ENCODE measurements at regions of chr10 and their contacts with region 1.

Region 1: GRCh38 chr10:110497438-110498086 is at the start of gene DUSP5:
- DNase-seq: no peak
- ATAC-seq: peak; percentile 72
- H3K4me3 ChIP-seq: peak within 1 kb of the TSS; percentile 87 to 92
- H3K27ac ChIP-seq: peak within 1 kb of the TSS; percentile 94
- H3K4me1 ChIP-seq: peaks cover 48% of the 10 kb centered on the region
- H3K27me3 ChIP-seq: no peaks in the 10 kb centered on the region
- CTCF ChIP-seq: no peak
- total RNA-seq, gene DUSP5: 30.1 TPM

Region 2: DNA sequence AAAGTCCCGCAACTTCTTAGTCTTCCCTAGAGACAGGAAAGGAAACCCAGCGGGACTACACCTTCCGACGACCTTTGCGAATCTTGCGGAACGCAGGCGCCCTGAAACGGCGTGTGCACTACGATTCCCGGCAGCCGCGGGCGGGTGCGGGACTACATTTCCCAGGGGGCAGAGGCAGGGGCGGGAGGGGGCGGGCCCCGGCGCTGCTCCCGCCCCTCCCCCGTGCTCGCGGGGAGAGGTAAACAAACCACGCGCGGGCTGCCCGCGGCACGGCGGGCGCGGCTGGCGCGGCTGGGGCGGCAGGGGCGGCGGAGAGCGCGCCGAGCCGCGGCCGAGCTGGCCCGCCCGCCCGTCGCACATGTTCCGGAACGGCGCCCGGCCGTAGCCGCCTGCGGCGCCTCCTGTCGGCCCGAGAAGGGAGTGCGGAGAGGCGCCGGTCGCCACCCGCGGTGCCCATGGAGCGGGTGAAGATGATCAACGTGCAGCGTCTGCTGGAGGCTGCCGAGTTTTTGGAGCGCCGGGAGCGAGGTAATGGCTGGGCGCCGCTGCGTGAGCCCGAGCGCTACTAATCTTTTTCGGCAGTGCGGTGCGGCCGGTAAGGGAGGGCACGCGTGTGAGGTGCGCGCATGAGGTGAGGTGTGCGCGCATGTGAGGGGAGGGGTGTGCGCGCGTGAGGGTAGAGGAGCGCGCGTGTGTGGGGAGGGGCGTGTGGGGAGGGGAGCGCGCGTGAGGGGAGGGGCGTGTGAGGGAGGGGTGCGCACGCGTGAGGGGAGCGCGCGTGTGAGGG is 271.6 kb before region 1 on chr10:
- CTCF ChIA-PET with region 1: interaction called, 10 read pairs
- POLR2A ChIA-PET with region 1: no interaction called
- in situ Hi-C with region 1: no loop called
- intact Hi-C with region 1: no loop called
- DNase-seq: no peak
- ATAC-seq: peak; percentile 95
- H3K4me3 ChIP-seq: peak overlapping the region; percentile 71 to 79
- H3K27ac ChIP-seq: peak overlapping the region; percentile 30
- H3K4me1 ChIP-seq: peaks cover 3% of the 10 kb centered on the region; the same call in 1 of the 2 replicates
- H3K27me3 ChIP-seq: no peaks in the 10 kb centered on the region; the same call in 1 of the 2 replicates
- CTCF ChIP-seq: peak; percentile 93

Region 3: DNA sequence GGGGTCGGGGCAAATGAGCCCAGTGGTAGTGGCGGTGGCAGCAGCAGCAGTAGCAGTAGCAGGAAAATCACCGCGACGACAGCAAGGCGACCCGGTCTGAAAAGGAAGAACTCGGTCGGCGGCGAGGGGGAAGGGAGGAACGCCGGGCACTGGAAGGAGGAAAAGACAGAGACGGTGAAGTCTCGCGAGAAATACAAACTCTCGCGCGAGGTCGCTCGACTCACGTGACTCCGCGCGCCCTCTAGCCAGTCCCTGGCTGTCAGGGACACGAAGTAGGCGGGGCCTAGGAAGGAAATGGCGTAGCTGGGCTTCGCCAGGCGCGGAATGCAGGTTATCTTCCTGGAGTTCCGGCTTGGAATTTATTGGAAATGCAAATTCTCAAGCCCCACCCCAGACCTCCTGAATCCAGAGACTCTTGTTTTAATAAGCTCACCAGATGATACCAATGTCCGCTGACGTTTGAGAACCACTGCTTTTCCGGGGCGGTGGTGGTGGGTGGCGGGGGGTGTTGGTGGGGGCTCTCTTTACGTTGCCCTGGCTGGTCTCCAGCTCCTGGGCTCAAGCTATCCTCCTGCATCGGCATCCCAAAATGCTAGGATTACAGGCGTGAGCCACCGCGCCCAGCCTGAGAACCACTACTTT is 192.7 kb before region 1 on chr10 and contains the start of gene SMNDC1:
- CTCF ChIA-PET with region 1: interaction called, 11 read pairs
- POLR2A ChIA-PET with region 1: no interaction called
- in situ Hi-C with region 1: no loop called
- intact Hi-C with region 1: no loop called
- DNase-seq: peak; percentile 91
- ATAC-seq: peak; percentile 97
- H3K4me3 ChIP-seq: peak within 1 kb of the TSS; percentile 97 to 98
- H3K27ac ChIP-seq: peak within 1 kb of the TSS; percentile 96
- H3K4me1 ChIP-seq: peaks cover 22% of the 10 kb centered on the region
- H3K27me3 ChIP-seq: no peaks in the 10 kb centered on the region
- CTCF ChIP-seq: no peak
- total RNA-seq, gene SMNDC1: 62.2 TPM

Region 4: DNA sequence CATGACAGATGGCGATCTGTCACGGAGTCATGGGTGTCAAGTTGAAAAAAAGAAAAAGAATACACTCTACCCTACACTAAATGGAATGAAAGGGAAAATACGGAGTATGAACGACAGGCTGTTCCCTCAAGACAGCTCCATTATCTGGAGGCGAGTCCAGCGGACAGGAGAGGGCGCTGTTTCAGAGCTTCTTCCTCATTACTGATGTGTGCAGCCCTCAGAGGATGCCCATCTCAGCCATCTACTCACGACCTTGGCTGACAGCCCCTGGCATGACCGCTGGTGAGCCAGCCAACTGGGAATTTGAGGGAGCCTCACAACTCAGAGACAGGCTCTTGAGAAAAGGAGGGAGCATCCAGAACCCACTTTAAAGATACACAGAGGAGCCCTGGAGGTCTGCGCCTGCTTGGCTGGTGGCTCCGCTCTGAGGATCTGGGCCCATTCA is 143.2 kb before region 1 on chr10:
- CTCF ChIA-PET with region 1: interaction called, 11 read pairs
- POLR2A ChIA-PET with region 1: no interaction called
- in situ Hi-C with region 1: no loop called
- intact Hi-C with region 1: loop called (anchors 5 kb)
- DNase-seq: peak; percentile 82
- ATAC-seq: peak; percentile 80
- H3K4me3 ChIP-seq: 0 out of 4 replicates have a peak overlapping the region, but pooled peaks of 1 of the 2 experiments have one; percentile 12
- H3K27ac ChIP-seq: peak overlapping the region; percentile 42; the same call in 1 of the 2 replicates
- H3K4me1 ChIP-seq: peaks cover 26% of the 10 kb centered on the region
- H3K27me3 ChIP-seq: no peaks in the 10 kb centered on the region
- CTCF ChIP-seq: peak; percentile 94

Region 5: DNA sequence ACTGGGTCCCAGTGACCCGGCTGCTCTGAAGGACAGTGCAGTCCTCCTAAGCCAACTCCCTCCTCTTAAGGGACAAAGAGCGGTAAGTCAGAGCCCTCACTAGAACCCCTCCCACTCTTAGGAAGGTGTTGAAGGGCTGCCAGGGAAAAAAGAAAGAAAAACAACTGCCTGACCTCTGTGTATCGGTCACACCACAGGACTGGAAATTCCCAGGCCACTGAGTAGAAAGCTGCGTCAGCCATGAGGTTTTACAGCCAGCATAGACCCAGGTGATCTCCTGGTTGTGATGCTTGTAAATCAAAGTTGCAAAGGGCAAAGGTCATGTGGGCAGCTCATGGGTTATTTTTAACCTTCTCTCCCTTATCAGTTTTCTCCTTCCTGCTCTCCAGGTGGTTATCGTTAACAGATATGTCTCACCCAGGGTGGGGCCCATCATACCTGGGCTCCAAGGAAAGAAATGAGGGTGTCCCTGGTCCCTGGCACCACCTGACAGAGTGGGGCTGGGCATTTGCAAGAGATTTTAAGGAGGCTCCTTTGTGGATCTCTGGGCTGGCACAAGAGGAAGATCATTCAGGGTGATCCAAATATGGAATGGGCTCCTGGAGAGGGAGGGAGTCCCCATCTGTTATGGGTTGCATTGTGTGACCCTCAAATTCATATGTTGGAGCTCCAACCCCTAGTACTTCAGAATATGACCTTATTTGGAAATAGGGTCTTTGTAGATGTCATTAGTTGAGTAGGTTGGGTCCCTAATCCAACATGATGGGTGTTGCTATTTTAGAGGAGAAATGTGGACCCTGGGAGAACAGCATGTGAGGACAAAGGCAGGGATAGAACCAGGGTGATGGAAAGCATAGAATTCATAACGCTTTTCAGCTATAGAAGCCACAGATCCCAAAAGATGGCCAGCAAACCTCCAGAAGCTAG is 101.6 kb before region 1 on chr10:
- CTCF ChIA-PET with region 1: no interaction called
- POLR2A ChIA-PET with region 1: no interaction called
- in situ Hi-C with region 1: no loop called
- intact Hi-C with region 1: loop called (anchors 5 kb)
- DNase-seq: peak; percentile 87
- ATAC-seq: peak; percentile 79
- H3K4me3 ChIP-seq: no peak overlapping the region
- H3K27ac ChIP-seq: peak overlapping the region; percentile 77
- H3K4me1 ChIP-seq: peaks cover 49% of the 10 kb centered on the region
- H3K27me3 ChIP-seq: no peaks in the 10 kb centered on the region
- CTCF ChIP-seq: no peak